ENCODE measurements at regions of chr15 and their contacts with region 1.

Region 1: GRCh38 chr15:101251830-101252820 is at the start of gene CHSY1:
- DNase-seq: peak; percentile 94 to 95
- ATAC-seq: peak; percentile 89 to 92 (median 90)
- H3K4me3 ChIP-seq: peak within 1 kb of the TSS; percentile 69 to 98 (median 89)
- H3K27ac ChIP-seq: peak within 1 kb of the TSS; percentile 84 to 97 (median 92)
- H3K4me1 ChIP-seq: peaks cover 10 to 66% (median 61%) of the 10 kb centered on the region in 9 donors
- H3K27me3 ChIP-seq: no peaks in the 10 kb centered on the region
- CTCF ChIP-seq: peak in 8 of 9 donors; percentile 13 to 53 (median 26)
- total RNA-seq, gene CHSY1: 9.7 to 35.1 (median 15.7) TPM

Region 2: GRCh38 chr15:100918034-100918689 is 334.0 kb before region 1 on chr15:
- intact Hi-C with region 1: loop called in 3 of 10 experiments (anchors 10 kb)
- DNase-seq: peak; percentile 66 to 80
- ATAC-seq: peak; percentile 90 to 97 (median 94)
- H3K4me3 ChIP-seq: peak overlapping the region; percentile 58 to 73 (median 66)
- H3K27ac ChIP-seq: peak overlapping the region in 7 of 10 donors; percentile 44 to 83 (median 74)
- H3K4me1 ChIP-seq: peaks cover 0 to 52% (median 16%) of the 10 kb centered on the region in 9 donors
- H3K27me3 ChIP-seq: peaks cover 0 to 45% (median 20%) of the 10 kb centered on the region in 7 donors
- CTCF ChIP-seq: peak; percentile 77 to 96 (median 92)

Region 3: DNA sequence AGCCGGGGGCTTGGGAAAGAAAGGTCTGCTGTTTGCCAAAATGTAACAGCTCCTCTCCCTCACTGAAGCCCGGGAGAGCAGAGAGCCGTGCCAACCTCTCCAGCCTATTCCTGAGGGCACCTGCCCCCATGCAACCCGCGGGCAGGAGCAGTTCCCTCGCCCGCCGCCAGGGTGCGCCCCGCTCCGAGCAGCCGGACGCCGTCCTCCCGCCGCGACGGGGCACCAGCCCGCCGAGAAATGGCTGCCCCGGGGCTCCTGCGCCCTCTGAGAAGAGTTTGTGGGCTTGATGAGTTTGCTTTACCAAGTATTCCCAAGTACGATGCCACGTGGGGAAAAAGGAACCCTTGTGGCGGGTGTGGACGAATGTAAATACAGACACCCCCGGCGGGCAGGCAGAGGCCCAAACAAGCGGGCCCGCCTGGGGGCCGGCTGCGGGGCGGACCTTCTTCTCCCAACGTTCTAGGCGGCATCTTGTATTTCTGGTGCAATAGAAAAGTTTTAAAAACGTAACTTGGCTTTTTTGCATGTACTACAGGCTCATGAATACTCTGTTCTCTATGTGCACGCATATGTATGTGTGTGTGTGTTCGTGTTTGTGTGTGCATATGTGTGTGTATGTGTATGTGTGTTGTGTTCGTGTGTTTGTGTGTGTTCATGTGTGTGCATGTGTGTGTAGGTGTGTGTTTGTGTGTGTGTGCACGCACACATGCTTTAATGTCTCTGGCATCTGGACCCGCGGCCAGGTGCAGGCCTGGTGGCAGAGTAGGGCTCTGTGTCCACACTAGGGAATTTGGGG is 163.1 kb before region 1 on chr15:
- intact Hi-C with region 1: loop called in 4 of 10 experiments (anchors 1 to 5 kb)
- DNase-seq: peak; percentile 68 to 84
- ATAC-seq: peak; percentile 65 to 79 (median 72)
- H3K4me3 ChIP-seq: peak overlapping the region in 5 of 10 donors; percentile 7 to 34 (median 25)
- H3K27ac ChIP-seq: peak overlapping the region in 4 of 10 donors; percentile 41 to 81 (median 78)
- H3K4me1 ChIP-seq: peaks cover 20 to 45% (median 30%) of the 10 kb centered on the region in 9 donors
- H3K27me3 ChIP-seq: no peaks in the 10 kb centered on the region
- CTCF ChIP-seq: peak; percentile 97 to 100 (median 99)

Region 4: DNA sequence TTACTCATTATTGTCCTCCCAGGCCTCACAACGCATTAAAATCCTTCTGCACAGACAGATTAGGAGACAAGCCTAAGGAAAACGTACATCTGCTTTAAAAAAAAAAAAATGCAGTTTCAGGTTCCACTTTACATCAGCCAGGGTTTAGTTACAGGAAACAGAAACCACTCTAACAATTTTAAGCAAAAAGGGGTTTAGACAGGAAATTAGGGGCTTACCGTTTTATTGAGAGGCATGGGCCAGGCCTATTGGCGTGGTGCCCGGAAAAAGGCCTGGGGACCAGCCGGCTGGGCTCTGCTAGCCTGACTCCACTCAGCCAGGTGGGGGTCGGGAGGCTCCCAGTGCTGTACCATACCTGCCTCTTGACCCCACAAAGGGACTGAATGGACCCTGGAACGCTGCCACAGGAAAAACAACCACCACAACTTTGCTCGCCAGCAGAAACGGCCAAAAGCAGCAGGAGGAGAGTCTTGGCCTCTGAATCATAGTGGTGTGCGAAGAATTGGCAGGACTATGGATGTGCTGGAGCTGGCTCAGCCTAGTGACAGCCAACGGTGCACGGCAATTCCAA is 124.5 kb before region 1 on chr15:
- intact Hi-C with region 1: loop called in 5 of 10 experiments (anchors 5 to 10 kb)
- DNase-seq: peak; percentile 73 to 86
- ATAC-seq: peak; percentile 92 to 95 (median 94)
- H3K4me3 ChIP-seq: no peak overlapping the region
- H3K27ac ChIP-seq: peak overlapping the region; percentile 14 to 94 (median 74)
- H3K4me1 ChIP-seq: peaks cover 0 to 69% (median 23%) of the 10 kb centered on the region in 9 donors
- H3K27me3 ChIP-seq: peaks cover 0 to 5% (median 0%) of the 10 kb centered on the region in 7 donors
- CTCF ChIP-seq: no peak

Region 5: GRCh38 chr15:101188637-101189408 is 63.3 kb before region 1 on chr15:
- intact Hi-C with region 1: loop called in 7 of 10 experiments (anchors 5 to 10 kb)
- DNase-seq: no peak
- ATAC-seq: peak in 7 of 8 donors; percentile 34 to 57 (median 36)
- H3K4me3 ChIP-seq: peak overlapping the region in 9 of 10 donors; percentile 3 to 51 (median 43)
- H3K27ac ChIP-seq: peak overlapping the region; percentile 28 to 96 (median 88)
- H3K4me1 ChIP-seq: peaks cover 15 to 100% (median 80%) of the 10 kb centered on the region in 9 donors
- H3K27me3 ChIP-seq: no peaks in the 10 kb centered on the region
- CTCF ChIP-seq: no peak

Region 6: GRCh38 chr15:101288908-101289513 is 36.9 kb after region 1 on chr15:
- intact Hi-C with region 1: no loop called
- DNase-seq: no peak
- ATAC-seq: peak in 3 of 8 donors; percentile 15 to 46 (median 28)
- H3K4me3 ChIP-seq: no peak overlapping the region
- H3K27ac ChIP-seq: no peak overlapping the region
- H3K4me1 ChIP-seq: peaks cover 0 to 28% (median 24%) of the 10 kb centered on the region in 9 donors
- H3K27me3 ChIP-seq: no peaks in the 10 kb centered on the region
- CTCF ChIP-seq: peak; percentile 29 to 73 (median 66)